ENCODE measurements at regions of chr14 and their contacts with region 1.

Region 1: DNA sequence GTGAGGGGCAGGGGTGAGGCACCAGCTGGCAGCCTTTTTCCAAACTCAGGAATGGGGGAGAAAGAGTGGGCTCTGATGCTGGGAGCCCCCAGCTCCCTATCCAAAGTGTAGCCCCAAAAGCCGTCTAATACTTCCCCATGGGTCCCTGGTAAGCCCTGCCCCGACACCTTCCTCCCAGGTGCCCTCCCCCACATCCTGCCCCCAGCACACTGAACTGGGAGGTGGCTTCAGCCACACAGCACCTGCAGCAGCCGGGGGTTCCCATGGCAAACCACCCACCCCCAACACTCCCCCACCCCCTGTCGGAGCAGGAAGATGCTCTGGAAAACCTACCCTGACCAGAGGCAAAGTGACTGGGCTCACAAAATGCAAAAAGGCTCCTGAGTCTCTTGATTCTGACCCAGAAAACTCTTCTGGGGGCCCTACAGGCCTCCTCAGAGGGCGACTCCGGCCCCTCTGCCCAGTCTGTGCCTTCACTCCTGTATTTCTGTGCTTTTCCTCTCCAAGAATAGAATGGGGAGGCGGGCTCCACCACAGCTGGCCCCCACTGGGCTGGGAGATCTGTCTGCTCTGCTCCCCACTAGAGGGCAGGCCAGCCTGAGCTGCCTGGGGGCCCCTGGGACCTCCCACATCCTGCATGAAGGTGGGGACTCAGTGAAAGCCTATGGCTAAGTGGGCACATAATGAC is 81.6 kb downstream of the ITPK1 start:
- DNase-seq: peak; percentile 77
- ATAC-seq: peak; percentile 90
- H3K4me3 Mint-ChIP-seq: peak overlapping the region; percentile 49
- H3K27ac Mint-ChIP-seq: peak overlapping the region; percentile 94
- H3K4me1 Mint-ChIP-seq: peaks cover 47% of the 10 kb centered on the region
- H3K27me3 Mint-ChIP-seq: no peaks in the 10 kb centered on the region

Region 2: GRCh38 chr14:93059917-93060545 is 25.9 kb after region 1 on chr14:
- CTCF ChIA-PET with region 1: interaction called, 15 read pairs
- POLR2A ChIA-PET with region 1: interaction called, 3 read pairs
- DNase-seq: peak; percentile 72
- ATAC-seq: peak; percentile 86
- H3K4me3 Mint-ChIP-seq: peak overlapping the region; percentile 53
- H3K27ac Mint-ChIP-seq: peak overlapping the region; percentile 86
- H3K4me1 Mint-ChIP-seq: peaks cover 66% of the 10 kb centered on the region
- H3K27me3 Mint-ChIP-seq: no peaks in the 10 kb centered on the region

Measured in activated CD8-positive, alpha-beta T cell treated with anti-CD3 and anti-CD28 coated beads, Interleukin-2, amount 10 ng/mL, durations not matched to agents 7 days and 5 days (primary cell).